ENCODE measurements at regions of chr11 and their contacts with region 1.

Region 1: GRCh38 chr11:34380696-34381095 is 22.9 kb upstream of the ABTB2 start:
- DNase-seq: peak; percentile 59
- H3K4me3 Mint-ChIP-seq: no peak overlapping the region
- H3K27ac Mint-ChIP-seq: no peak overlapping the region
- H3K4me1 Mint-ChIP-seq: peaks cover 8% of the 10 kb centered on the region
- H3K27me3 Mint-ChIP-seq: no peaks in the 10 kb centered on the region
- CTCF ChIP-seq: no peak

Region 2: GRCh38 chr11:34395916-34396550 is 15.3 kb after region 1 on chr11:
- CTCF ChIA-PET with region 1: interaction called, 6 read pairs
- POLR2A ChIA-PET with region 1: interaction called, 15 read pairs
- intact Hi-C with region 1: no loop called
- DNase-seq: peak; percentile 84
- H3K4me3 Mint-ChIP-seq: no peak overlapping the region
- H3K27ac Mint-ChIP-seq: no peak overlapping the region
- H3K4me1 Mint-ChIP-seq: peaks cover 6% of the 10 kb centered on the region
- H3K27me3 Mint-ChIP-seq: no peaks in the 10 kb centered on the region
- CTCF ChIP-seq: no peak

Region 3: GRCh38 chr11:34594603-34595002 is 213.9 kb after region 1 on chr11:
- CTCF ChIA-PET with region 1: no interaction called
- POLR2A ChIA-PET with region 1: no interaction called
- intact Hi-C with region 1: no loop called
- DNase-seq: no peak
- H3K4me3 Mint-ChIP-seq: no peak overlapping the region
- H3K27ac Mint-ChIP-seq: no peak overlapping the region
- H3K4me1 Mint-ChIP-seq: peaks cover 19% of the 10 kb centered on the region
- H3K27me3 Mint-ChIP-seq: no peaks in the 10 kb centered on the region
- CTCF ChIP-seq: no peak